Calu3 (cell line): ENCODE measurements at regions of chrX and their contacts with region 1.

Region 1: GRCh38 chrX:43557792-43558191 is 98.3 kb upstream of the MAOA start:
- DNase-seq: peak; percentile 58
- H3K4me3 Mint-ChIP-seq: no peak overlapping the region
- H3K27ac Mint-ChIP-seq: no peak overlapping the region
- H3K4me1 Mint-ChIP-seq: peaks cover 7% of the 10 kb centered on the region
- H3K27me3 Mint-ChIP-seq: no peaks in the 10 kb centered on the region
- CTCF ChIP-seq: no peak

Region 2: DNA sequence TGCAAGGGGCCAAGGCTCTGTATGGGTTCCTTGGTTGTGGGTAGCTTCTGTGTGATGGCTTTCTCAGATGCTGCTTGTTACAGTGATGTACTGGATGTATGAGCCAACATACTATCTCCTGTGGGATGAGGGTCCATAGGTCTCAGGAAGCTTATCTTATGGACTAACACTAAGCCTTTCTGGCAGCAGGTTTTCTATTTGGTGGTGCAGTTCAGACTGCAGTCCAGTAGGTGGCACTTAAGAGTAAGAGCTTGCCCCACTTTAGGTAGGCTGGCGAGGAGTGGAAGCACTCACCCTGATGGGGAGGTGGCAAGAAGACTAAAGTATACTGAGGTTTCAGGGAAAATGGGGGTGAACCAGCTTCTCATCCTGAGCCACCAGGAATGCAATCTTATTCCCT is 208.4 kb before region 1 on chrX:
- CTCF ChIA-PET with region 1: interaction called, 5 read pairs
- intact Hi-C with region 1: loop called (anchors 1 kb)
- DNase-seq: peak; percentile 46
- H3K4me3 Mint-ChIP-seq: no peak overlapping the region
- H3K27ac Mint-ChIP-seq: no peak overlapping the region
- H3K4me1 Mint-ChIP-seq: no peaks in the 10 kb centered on the region
- H3K27me3 Mint-ChIP-seq: peaks cover 13% of the 10 kb centered on the region
- CTCF ChIP-seq: peak; percentile 58

Region 3: DNA sequence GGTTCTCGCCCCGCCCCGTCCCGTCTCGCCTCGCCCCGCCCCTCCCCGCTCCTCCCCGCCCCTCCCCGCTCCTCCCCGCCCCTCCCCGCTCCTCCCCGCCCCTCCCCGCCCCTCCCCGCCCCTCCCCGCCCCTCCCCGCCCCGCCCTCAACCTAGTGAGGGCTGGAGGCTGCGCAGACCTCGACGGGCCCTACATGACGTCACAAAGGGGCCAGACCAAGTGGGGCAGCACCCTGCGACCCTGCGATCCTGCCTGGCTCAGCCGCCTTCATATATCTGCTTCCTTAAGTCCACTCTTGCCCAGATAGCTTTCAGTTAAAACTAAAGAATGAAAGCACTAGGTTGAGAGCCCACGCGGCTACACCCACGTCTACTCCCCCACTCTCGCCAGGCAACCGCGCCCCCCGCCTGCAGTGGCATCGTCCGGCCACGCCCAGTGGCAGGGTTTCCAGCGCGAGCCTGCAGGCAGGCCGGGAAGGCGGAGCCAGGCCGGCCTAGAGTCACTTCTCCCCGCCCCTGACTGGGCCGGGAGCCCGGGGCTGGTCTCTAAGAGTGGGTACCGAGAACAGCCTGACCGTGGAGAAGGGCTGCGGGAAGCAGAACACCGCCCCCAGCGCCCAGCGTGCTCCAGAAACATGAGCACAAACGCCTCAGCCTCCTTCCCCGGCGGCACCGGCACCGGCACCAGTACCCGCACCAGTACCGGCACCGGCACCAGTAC is 96.8 kb after region 1 on chrX:
- CTCF ChIA-PET with region 1: no interaction called
- intact Hi-C with region 1: loop called (anchors 5 kb)
- DNase-seq: peak; percentile 92
- H3K4me3 Mint-ChIP-seq: peak overlapping the region; percentile 71
- H3K27ac Mint-ChIP-seq: peak overlapping the region; percentile 93
- H3K4me1 Mint-ChIP-seq: peaks cover 8% of the 10 kb centered on the region
- H3K27me3 Mint-ChIP-seq: no peaks in the 10 kb centered on the region
- CTCF ChIP-seq: no peak

Region 4: GRCh38 chrX:43750248-43750676 is 192.5 kb after region 1 on chrX:
- CTCF ChIA-PET with region 1: interaction called, 11 read pairs
- intact Hi-C with region 1: loop called (anchors 1 kb)
- DNase-seq: peak; percentile 40
- H3K4me3 Mint-ChIP-seq: no peak overlapping the region
- H3K27ac Mint-ChIP-seq: no peak overlapping the region
- H3K4me1 Mint-ChIP-seq: no peaks in the 10 kb centered on the region
- H3K27me3 Mint-ChIP-seq: no peaks in the 10 kb centered on the region
- CTCF ChIP-seq: peak; percentile 35

Region 5: GRCh38 chrX:43939187-43939926 is 381.6 kb after region 1 on chrX:
- CTCF ChIA-PET with region 1: no interaction called
- intact Hi-C with region 1: loop called (anchors 5 kb)
- DNase-seq: no peak
- H3K4me3 Mint-ChIP-seq: no peak overlapping the region
- H3K27ac Mint-ChIP-seq: no peak overlapping the region
- H3K4me1 Mint-ChIP-seq: peaks cover 9% of the 10 kb centered on the region
- H3K27me3 Mint-ChIP-seq: no peaks in the 10 kb centered on the region
- CTCF ChIP-seq: no peak